CD4-positive, alpha-beta memory T cell (primary cell): ENCODE measurements at regions of chr15 and their contacts with region 1.

Region 1: GRCh38 chr15:67065444-67066093 is at the start of gene SMAD3:
- DNase-seq: peak; percentile 66 to 82 (median 70)
- H3K4me3 ChIP-seq: peak within 1 kb of the TSS; percentile 79 to 94
- H3K4me3 Mint-ChIP-seq: peak within 1 kb of the TSS; percentile 94 to 99 (median 98)
- H3K27ac ChIP-seq: peak within 1 kb of the TSS; percentile 66
- H3K27ac Mint-ChIP-seq: peak within 1 kb of the TSS; percentile 93 to 97 (median 96)
- H3K4me1 ChIP-seq: peaks cover 58% of the 10 kb centered on the region
- H3K4me1 Mint-ChIP-seq: peaks cover 44 to 61% (median 51%) of the 10 kb centered on the region in 4 donors
- H3K27me3 ChIP-seq: no peaks in the 10 kb centered on the region
- H3K27me3 Mint-ChIP-seq: no peaks in the 10 kb centered on the region
- total RNA-seq, gene SMAD3: 189 to 197 TPM

Region 2: GRCh38 chr15:67080900-67081431 is 15.4 kb after region 1 on chr15:
- CTCF ChIA-PET with region 1: interaction called, 71 read pairs
- POLR2A ChIA-PET with region 1: interaction called, 302 read pairs
- intact Hi-C with region 1: loop called (anchors 1 kb)
- DNase-seq: peak in 2 of 5 donors; percentile 32 to 71
- H3K4me3 ChIP-seq: no peak overlapping the region
- H3K4me3 Mint-ChIP-seq: peak overlapping the region in 7 of 8 donors; percentile 37 to 93 (median 72)
- H3K27ac ChIP-seq: peak overlapping the region; percentile 58
- H3K27ac Mint-ChIP-seq: peak overlapping the region; percentile 92 to 98 (median 95)
- H3K4me1 ChIP-seq: peaks cover 99% of the 10 kb centered on the region
- H3K4me1 Mint-ChIP-seq: peaks cover 79 to 98% (median 92%) of the 10 kb centered on the region in 4 donors
- H3K27me3 ChIP-seq: no peaks in the 10 kb centered on the region
- H3K27me3 Mint-ChIP-seq: no peaks in the 10 kb centered on the region

Region 3: GRCh38 chr15:67101911-67102598 is 36.5 kb after region 1 on chr15:
- CTCF ChIA-PET with region 1: interaction called, 37 read pairs
- POLR2A ChIA-PET with region 1: interaction called, 382 read pairs
- intact Hi-C with region 1: loop called (anchors 1 kb)
- DNase-seq: peak; percentile 57 to 77 (median 66)
- H3K4me3 ChIP-seq: peak overlapping the region; percentile 12 to 28
- H3K4me3 Mint-ChIP-seq: no peak overlapping the region
- H3K27ac ChIP-seq: peak overlapping the region; percentile 75
- H3K27ac Mint-ChIP-seq: no peak overlapping the region
- H3K4me1 ChIP-seq: peaks cover 99% of the 10 kb centered on the region
- H3K4me1 Mint-ChIP-seq: peaks cover 26 to 55% (median 27%) of the 10 kb centered on the region in 4 donors
- H3K27me3 ChIP-seq: no peaks in the 10 kb centered on the region
- H3K27me3 Mint-ChIP-seq: no peaks in the 10 kb centered on the region

Region 4: GRCh38 chr15:67120839-67121643 is 55.5 kb after region 1 on chr15:
- CTCF ChIA-PET with region 1: interaction called, 4 read pairs
- POLR2A ChIA-PET with region 1: interaction called, 51 read pairs
- intact Hi-C with region 1: loop called (anchors 2 kb)
- DNase-seq: peak; percentile 84 to 96 (median 87)
- H3K4me3 ChIP-seq: peak overlapping the region in 1 of 2 donors; percentile 45
- H3K4me3 Mint-ChIP-seq: peak overlapping the region; percentile 74 to 87 (median 82)
- H3K27ac ChIP-seq: peak overlapping the region; percentile 80
- H3K27ac Mint-ChIP-seq: peak overlapping the region; percentile 92 to 100 (median 98)
- H3K4me1 ChIP-seq: peaks cover 100% of the 10 kb centered on the region
- H3K4me1 Mint-ChIP-seq: peaks cover 63 to 99% (median 90%) of the 10 kb centered on the region in 4 donors
- H3K27me3 ChIP-seq: no peaks in the 10 kb centered on the region
- H3K27me3 Mint-ChIP-seq: no peaks in the 10 kb centered on the region

Region 5: GRCh38 chr15:67181191-67181645 is 115.6 kb after region 1 on chr15:
- CTCF ChIA-PET with region 1: interaction called, 3 read pairs
- POLR2A ChIA-PET with region 1: interaction called, 3 read pairs
- intact Hi-C with region 1: loop called (anchors 5 kb)
- DNase-seq: no peak
- H3K4me3 ChIP-seq: no peak overlapping the region
- H3K4me3 Mint-ChIP-seq: no peak overlapping the region
- H3K27ac ChIP-seq: no peak overlapping the region
- H3K27ac Mint-ChIP-seq: peak overlapping the region in 3 of 7 donors; percentile 37 to 68 (median 64)
- H3K4me1 ChIP-seq: no peaks in the 10 kb centered on the region
- H3K4me1 Mint-ChIP-seq: peaks cover 3 to 20% (median 13%) of the 10 kb centered on the region in 4 donors
- H3K27me3 ChIP-seq: no peaks in the 10 kb centered on the region
- H3K27me3 Mint-ChIP-seq: no peaks in the 10 kb centered on the region

Region 6: GRCh38 chr15:67254238-67255175 is 188.9 kb after region 1 on chr15 and contains the starts of genes AAGAB and IQCH:
- CTCF ChIA-PET with region 1: no interaction called
- POLR2A ChIA-PET with region 1: interaction called, 4 read pairs
- intact Hi-C with region 1: loop called (anchors 1 kb)
- DNase-seq: peak; percentile 93 to 97 (median 95)
- H3K4me3 ChIP-seq: peak within 1 kb of the TSS; percentile 96 to 98
- H3K4me3 Mint-ChIP-seq: peak within 1 kb of the TSS; percentile 96 to 99 (median 98)
- H3K27ac ChIP-seq: peak within 1 kb of the TSS; percentile 85
- H3K27ac Mint-ChIP-seq: peak within 1 kb of the TSS; percentile 89 to 99 (median 96)
- H3K4me1 ChIP-seq: peaks cover 34% of the 10 kb centered on the region
- H3K4me1 Mint-ChIP-seq: peaks cover 26 to 54% (median 40%) of the 10 kb centered on the region in 4 donors
- H3K27me3 ChIP-seq: no peaks in the 10 kb centered on the region
- H3K27me3 Mint-ChIP-seq: no peaks in the 10 kb centered on the region
- total RNA-seq, gene AAGAB: 30.2 to 30.3 TPM
- total RNA-seq, gene IQCH: 1.1 to 2.1 TPM

Region 7: DNA sequence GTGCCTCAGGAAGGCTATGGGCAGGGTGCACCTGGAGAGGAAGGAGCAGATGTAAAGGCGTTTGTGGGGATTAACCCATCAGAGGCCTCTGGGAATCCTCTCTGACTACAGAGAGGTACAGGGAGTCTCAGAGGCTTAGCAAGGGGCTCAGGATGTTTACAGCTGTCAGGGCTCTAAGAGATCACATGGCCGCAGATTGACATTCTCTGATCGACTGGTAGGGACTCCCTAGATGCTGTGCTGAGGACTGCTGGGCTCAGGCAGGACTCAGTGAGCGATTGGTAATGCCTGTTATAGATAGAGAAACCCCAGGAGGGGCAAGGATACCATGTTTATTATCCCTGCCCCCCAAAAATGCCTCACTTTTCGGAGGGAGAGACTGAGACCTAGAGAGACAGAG is 1616.8 kb after region 1 on chr15:
- CTCF ChIA-PET with region 1: no interaction called
- POLR2A ChIA-PET with region 1: no interaction called
- intact Hi-C with region 1: no loop called
- DNase-seq: no peak
- H3K4me3 ChIP-seq: no peak overlapping the region
- H3K4me3 Mint-ChIP-seq: no peak overlapping the region
- H3K27ac ChIP-seq: no peak overlapping the region
- H3K27ac Mint-ChIP-seq: no peak overlapping the region
- H3K4me1 ChIP-seq: no peaks in the 10 kb centered on the region
- H3K4me1 Mint-ChIP-seq: no peaks in the 10 kb centered on the region
- H3K27me3 ChIP-seq: no peaks in the 10 kb centered on the region
- H3K27me3 Mint-ChIP-seq: peaks cover 5 to 15% of the 10 kb centered on the region in 2 donors